Transverse colon (tissue), 4 donors: ENCODE measurements at regions of chr20 and their contacts with region 1.

Region 1: GRCh38 chr20:41173161-41173721 is 35.9 kb downstream of the PLCG1 start:
- DNase-seq: peak; percentile 86
- H3K4me3 ChIP-seq: no peak overlapping the region
- H3K27ac ChIP-seq: peak overlapping the region; percentile 16 to 80 (median 50)
- H3K4me1 ChIP-seq: peaks cover 9 to 34% (median 21%) of the 10 kb centered on the region in 4 donors
- H3K27me3 ChIP-seq: no peaks in the 10 kb centered on the region
- CTCF ChIP-seq: peak; percentile 95 to 96 (median 95)
- EP300 ChIP-seq: no peak
- POLR2A ChIP-seq: no peak

Region 2: DNA sequence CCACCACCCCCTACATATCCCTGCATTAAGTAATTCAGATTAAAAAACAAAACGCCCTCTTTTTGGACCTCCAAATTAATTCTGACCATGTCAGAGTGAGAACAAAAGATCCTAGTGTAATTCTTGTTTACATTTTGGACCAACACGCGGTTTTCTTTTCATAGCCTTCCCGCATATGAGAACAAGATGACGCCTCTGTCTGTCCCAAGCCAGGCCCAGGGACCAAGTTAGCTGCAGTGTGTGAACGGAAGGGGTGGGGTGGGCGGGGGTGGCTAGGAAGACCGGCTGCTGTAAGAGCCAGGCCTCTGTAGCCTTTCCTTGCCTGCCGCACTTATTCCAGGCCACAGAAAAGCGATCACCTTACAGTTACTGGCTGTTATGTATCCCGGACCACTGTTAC is 32.1 kb after region 1 on chr20:
- in situ Hi-C with region 1: no loop called
- intact Hi-C with region 1: no loop called
- DNase-seq: no peak
- H3K4me3 ChIP-seq: no peak overlapping the region
- H3K27ac ChIP-seq: no peak overlapping the region
- H3K4me1 ChIP-seq: no peaks in the 10 kb centered on the region
- H3K27me3 ChIP-seq: no peaks in the 10 kb centered on the region
- CTCF ChIP-seq: no peak
- EP300 ChIP-seq: no peak
- POLR2A ChIP-seq: no peak

Region 3: DNA sequence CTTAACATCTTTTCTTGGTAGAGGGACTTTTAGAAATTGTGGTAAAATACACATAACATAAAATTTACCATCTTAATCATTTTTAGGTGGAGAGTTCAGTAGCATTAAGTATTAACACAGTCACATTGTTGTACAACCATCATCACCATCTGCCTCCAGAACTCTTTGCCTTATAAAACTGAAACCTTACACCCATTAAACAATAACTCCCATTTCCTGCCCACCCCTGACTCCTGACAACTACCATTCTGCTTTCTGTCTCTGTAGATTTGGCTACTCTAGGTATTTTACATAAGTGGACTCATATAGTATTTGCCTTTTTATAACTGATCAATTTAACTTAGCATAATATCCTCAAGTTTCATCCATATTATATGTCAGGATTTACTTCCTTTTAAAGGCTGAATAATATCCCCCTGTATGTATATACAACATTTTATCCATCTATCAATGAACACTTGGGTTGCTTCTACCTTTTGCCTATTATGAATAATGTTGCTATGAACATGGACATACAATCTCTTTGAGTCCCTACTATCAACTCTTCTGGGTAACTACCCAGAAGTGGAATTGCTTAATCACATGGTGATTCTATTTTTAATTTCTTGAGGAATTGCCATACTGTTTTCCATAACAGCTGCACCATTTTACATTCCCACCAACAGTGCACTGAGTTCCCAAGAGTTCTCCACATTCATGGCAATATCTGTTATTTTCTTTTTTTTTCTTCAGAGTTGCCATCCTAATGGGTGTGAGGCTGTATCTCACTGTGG is 55.8 kb after region 1 on chr20:
- in situ Hi-C with region 1: loop called in 1 of 4 experiments (anchors 10 kb)
- intact Hi-C with region 1: loop called (anchors 2 kb)
- DNase-seq: no peak
- H3K4me3 ChIP-seq: no peak overlapping the region
- H3K27ac ChIP-seq: no peak overlapping the region
- H3K4me1 ChIP-seq: peaks cover 10 to 24% (median 13%) of the 10 kb centered on the region in 4 donors
- H3K27me3 ChIP-seq: no peaks in the 10 kb centered on the region
- CTCF ChIP-seq: no peak
- EP300 ChIP-seq: no peak
- POLR2A ChIP-seq: no peak

Region 4: GRCh38 chr20:41329435-41330342 is 156.4 kb after region 1 on chr20:
- in situ Hi-C with region 1: loop called in 2 of 4 experiments (anchors 5 to 10 kb)
- intact Hi-C with region 1: no loop called
- DNase-seq: peak; percentile 64
- H3K4me3 ChIP-seq: no peak overlapping the region
- H3K27ac ChIP-seq: peak overlapping the region; percentile 70 to 82 (median 77)
- H3K4me1 ChIP-seq: peaks cover 5 to 17% (median 9%) of the 10 kb centered on the region in 4 donors
- H3K27me3 ChIP-seq: no peaks in the 10 kb centered on the region
- CTCF ChIP-seq: no peak
- EP300 ChIP-seq: no peak
- POLR2A ChIP-seq: no peak